Sigmoid colon (tissue), 7 donors: ENCODE measurements at regions of chr17 and their contacts with region 1.

Region 1: DNA sequence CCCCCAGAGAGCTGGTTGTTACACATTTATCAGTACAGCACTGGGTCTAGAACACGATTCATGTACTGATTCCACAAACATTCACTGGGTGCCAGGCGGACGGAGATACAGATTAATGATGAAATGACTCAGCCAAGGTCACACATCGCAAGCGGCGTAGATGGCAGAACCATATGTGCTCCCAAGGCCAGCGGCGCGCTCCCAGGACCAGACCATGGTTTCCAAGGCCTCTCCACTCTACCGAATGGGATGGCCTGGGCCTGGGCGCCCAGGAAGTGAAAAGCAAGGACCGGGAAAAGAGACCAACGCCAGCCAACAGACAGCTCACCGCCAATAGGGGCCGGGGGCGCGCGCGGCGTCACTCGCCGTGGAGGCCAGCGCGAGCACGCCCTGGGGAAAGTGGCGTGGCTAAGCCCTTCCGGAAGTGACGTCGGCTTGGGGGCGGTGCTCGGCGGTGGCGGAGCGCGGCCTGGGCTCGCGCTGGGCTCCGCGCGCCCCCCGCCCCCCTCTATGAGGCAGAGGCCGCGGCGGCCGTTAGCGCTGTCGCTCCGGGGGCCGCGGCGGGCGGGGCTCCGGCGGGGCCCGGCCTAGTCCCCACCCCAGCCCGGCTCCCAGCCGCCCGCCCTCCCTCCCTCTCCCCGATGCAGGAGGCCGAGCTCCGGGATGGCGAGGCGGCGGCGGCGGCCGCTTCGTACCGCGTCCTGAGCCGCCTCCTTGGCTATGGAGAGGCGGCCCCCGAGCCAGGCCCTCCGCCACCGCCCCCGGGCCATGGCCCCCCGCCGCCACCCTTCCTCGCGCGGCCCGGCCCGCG is at the start of gene SOCS7:
- DNase-seq: peak; percentile 95
- H3K4me3 ChIP-seq: peak within 1 kb of the TSS; percentile 60 to 90 (median 85)
- H3K27ac ChIP-seq: peak within 1 kb of the TSS; percentile 87 to 94 (median 90)
- H3K4me1 ChIP-seq: peaks cover 0 to 43% (median 40%) of the 10 kb centered on the region in 4 donors
- H3K27me3 ChIP-seq: no peaks in the 10 kb centered on the region
- CTCF ChIP-seq: no peak
- EP300 ChIP-seq: no peak
- POLR2A ChIP-seq: peak; percentile 31 to 37
- total RNA-seq, gene SOCS7: 13.9 to 20.2 (median 17.3) TPM

Region 2: DNA sequence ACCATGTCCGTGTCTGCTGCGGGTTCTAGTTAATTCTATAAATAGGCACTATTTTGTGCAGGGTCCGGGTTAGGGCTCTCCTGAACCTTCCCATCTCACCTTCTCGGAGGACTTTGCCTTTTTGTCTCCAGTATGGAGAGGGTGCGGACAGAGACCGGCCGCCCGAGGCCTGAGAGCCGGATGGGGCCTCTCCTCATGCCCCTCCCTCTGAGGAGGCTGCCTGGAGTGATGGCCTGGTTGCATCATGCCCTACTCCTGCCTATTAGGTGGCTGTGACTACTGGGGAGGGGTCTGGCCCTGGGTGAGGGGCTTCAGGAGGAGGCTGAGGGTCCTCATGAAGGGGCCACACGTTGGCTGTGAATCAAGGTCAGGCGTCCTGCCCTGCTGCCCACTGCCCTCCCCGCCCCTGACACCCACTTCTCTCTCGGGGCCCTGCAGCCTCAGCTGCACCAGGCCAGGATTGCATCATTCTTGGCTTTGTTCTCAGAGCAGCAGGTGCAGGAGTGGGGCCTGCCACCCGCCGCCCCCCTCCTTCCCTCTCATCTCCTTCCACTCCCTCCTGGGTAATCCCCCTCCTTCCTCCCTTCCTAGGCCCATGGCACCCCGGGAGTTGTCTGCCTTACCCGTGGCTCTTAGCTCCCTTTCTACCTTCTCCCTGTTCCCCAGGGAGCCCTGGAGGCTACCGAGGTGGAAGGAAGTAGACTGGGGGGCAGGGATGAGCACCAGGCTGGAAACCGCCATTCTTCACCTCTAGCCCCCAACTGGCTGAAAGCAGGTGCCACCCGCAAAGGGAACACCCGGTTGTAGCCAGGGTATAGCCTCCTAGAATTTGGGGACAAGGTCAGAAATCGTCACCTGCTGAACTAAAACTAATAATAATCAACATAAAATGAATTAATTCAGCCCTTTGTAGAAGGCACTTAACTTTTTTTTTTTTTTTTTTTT is 63.9 kb after region 1 on chr17:
- intact Hi-C with region 1: loop called (anchors 1 kb)
- DNase-seq: no peak
- H3K4me3 ChIP-seq: peak overlapping the region in 1 of 4 donors; percentile 9
- H3K27ac ChIP-seq: peak overlapping the region in 1 of 4 donors; percentile 45
- H3K4me1 ChIP-seq: peaks cover 0 to 40% (median 32%) of the 10 kb centered on the region in 4 donors
- H3K27me3 ChIP-seq: no peaks in the 10 kb centered on the region
- CTCF ChIP-seq: no peak
- EP300 ChIP-seq: no peak
- POLR2A ChIP-seq: no peak

Region 3: DNA sequence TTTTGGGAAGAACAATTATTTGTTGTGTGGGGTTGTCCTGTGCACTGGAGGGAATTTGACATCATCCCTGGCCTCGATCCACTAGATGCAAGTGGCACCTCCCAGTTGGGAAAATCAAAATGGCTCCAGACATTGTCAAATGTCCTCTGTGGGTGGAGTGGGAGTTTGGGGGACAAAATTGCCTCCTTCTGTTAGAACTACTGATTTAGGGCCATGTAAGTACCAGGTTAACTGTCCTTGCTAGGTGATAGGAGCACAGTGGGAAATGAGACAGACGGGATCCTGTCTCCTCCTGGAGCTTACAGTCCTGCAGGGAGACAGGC is 133.5 kb after region 1 on chr17:
- intact Hi-C with region 1: loop called (anchors 5 kb)
- DNase-seq: no peak
- H3K4me3 ChIP-seq: no peak overlapping the region
- H3K27ac ChIP-seq: peak overlapping the region; percentile 15 to 89 (median 70)
- H3K4me1 ChIP-seq: peaks cover 0 to 38% (median 21%) of the 10 kb centered on the region in 4 donors
- H3K27me3 ChIP-seq: no peaks in the 10 kb centered on the region
- CTCF ChIP-seq: no peak
- EP300 ChIP-seq: no peak
- POLR2A ChIP-seq: no peak

Region 4: DNA sequence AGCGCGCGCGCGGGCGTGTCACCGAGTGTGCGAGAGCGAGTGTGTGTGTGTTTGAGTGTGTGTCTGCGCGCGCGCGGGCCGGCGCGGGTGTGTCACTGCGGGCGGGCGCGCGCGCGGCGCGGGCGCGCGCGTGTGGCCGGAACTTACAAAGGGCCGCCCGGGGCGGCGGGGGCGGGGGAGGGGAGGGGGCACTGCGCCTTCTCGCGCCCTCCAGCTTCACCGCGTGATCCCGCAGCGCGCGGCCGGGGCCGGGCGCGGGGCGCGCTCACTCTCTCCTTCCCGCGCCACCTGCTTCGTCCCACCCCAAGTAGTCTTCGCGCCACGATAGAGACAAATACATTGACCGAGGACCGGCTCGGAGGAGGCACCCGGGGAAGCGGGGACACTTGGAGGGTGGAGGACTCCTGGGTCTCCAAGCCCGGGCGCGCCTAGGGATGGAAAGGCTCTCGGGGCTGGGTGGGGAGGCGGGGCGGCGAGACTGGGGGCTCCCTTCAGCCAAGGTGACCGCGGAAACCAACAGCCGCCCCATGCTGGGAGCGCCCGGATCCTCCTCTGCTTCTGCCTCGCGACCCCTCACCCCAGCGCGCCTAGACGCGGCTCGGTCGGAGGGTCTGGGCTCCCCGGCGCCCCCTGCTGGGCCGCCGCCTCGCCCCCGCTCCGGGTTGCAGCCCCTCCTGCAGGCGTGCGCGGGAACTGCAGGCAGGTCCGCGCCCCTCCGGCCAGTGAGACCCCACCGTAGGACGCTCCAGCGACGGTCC is 254.4 kb after region 1 on chr17 and contains the start of gene SRCIN1:
- intact Hi-C with region 1: loop called (anchors 10 kb)
- DNase-seq: peak; percentile 73
- H3K4me3 ChIP-seq: peak within 1 kb of the TSS; percentile 40 to 63 (median 58)
- H3K27ac ChIP-seq: peak within 1 kb of the TSS in 3 of 4 donors; percentile 51 to 63 (median 54)
- H3K4me1 ChIP-seq: peaks cover 0 to 53% (median 42%) of the 10 kb centered on the region in 4 donors
- H3K27me3 ChIP-seq: peaks cover 0 to 53% (median 40%) of the 10 kb centered on the region in 3 donors
- CTCF ChIP-seq: peak; percentile 56 to 79 (median 60)
- EP300 ChIP-seq: no peak
- POLR2A ChIP-seq: no peak
- total RNA-seq, gene SRCIN1: 0.81 to 9.4 (median 1.7) TPM